Body of pancreas (tissue), 4 donors: ENCODE measurements at regions of chr9 and their contacts with region 1.

Region 1: GRCh38 chr9:37496020-37496419 is 10.3 kb downstream of the POLR1E start:
- DNase-seq: no peak
- ATAC-seq: no peak
- H3K4me3 ChIP-seq: no peak overlapping the region
- H3K27ac ChIP-seq: no peak overlapping the region
- H3K4me1 ChIP-seq: no peaks in the 10 kb centered on the region
- H3K27me3 ChIP-seq: no peaks in the 10 kb centered on the region
- CTCF ChIP-seq: no peak
- POLR2A ChIP-seq: no peak

Region 2: DNA sequence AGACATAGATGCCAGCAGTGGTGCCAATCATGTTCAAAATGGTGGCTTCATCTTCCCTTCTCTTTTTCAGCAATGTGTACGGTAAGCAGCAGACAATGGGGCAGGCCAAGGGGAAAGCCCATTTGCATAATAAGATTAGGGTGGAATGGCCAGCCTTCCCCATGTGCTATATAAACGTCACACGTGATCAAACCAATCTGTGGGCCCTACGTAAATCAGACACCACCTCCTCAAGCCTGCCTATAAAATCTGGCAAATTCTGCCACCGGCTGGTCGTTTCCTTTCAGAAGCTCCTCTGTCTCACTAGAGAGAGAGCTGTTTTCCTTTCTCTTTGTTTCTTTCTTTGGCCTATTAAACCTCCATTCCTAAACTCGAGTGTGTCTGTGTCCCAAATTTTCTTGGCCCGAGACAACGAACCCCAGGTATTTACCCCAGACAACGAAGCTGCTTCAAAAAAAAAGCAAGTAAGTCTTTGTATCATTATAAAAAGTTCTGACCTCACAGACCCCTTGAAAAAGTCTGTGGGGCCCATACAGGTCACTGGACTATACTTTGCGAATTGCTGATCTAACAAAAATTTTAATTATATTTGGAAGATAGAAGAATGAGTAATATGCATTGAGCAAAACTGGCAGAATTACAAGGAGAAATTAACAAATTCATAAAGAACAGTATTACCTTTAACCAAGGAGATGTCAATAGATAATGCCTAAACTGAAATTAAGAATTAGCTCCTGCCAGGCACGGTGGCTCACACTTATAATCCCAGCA is 46.0 kb before region 1 on chr9:
- intact Hi-C with region 1: loop called (anchors 10 kb)
- DNase-seq: no peak
- ATAC-seq: no peak
- H3K4me3 ChIP-seq: no peak overlapping the region
- H3K27ac ChIP-seq: no peak overlapping the region
- H3K4me1 ChIP-seq: peaks cover 37% of the 10 kb centered on the region
- H3K27me3 ChIP-seq: no peaks in the 10 kb centered on the region
- CTCF ChIP-seq: no peak
- POLR2A ChIP-seq: no peak

Region 3: GRCh38 chr9:37632479-37632878 is 136.5 kb after region 1 on chr9:
- intact Hi-C with region 1: no loop called
- DNase-seq: no peak
- ATAC-seq: no peak
- H3K4me3 ChIP-seq: no peak overlapping the region
- H3K27ac ChIP-seq: no peak overlapping the region
- H3K4me1 ChIP-seq: no peaks in the 10 kb centered on the region
- H3K27me3 ChIP-seq: no peaks in the 10 kb centered on the region
- CTCF ChIP-seq: no peak
- POLR2A ChIP-seq: no peak